ENCODE measurements at regions of chr10 and their contacts with region 1.

Region 1: DNA sequence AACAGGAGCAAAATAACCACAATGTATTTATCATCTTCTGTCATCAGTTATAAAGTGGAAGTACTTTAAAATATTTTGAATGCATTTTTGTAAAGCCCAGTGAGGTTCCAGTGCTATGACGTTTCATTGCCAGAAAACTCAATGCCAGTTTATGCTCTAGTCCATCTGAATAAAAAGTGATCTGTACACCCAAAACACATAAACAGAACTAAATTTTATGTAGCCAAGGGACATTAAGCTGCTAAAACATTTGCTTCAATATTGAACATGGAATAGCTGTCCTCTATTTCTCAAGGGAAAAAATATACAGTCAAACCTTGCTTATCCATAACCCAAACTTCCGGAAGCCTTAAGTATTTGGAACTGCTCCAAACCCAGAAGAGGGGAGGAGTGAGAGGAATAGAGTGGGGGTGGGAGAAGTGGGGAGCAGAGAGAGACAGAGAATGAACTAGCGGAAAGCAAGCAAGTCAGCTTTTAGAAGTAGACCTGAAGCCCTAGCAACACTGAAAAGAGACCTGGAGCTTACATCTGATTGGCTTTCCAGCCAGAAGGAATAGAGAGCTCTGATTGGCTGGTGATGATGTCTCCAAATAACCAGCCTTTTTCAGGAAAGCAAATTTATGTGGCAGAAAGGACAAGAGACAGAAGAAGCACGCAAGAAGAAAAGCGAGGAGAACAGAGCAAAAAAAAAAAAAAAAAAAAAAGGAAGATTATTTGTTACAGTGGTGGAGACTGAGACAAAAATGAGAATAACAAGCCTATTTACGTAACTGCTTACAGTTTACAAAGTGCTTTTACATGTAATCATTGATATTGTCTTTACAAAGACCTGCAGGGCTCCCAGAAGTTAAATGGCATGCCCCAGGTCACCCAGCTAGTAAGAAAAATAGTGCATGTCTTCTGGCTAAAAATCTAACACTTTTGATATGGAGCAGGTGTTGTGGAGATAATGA is 196.0 kb downstream of the RNLS start:
- DNase-seq: peak; percentile 48
- H3K4me3 ChIP-seq: peak overlapping the region in 1 of 2 experiments; percentile 17; a peak in 1 of 4 replicates
- H3K27ac ChIP-seq: peak overlapping the region; percentile 55 to 98
- H3K4me1 ChIP-seq: peaks cover 9 to 35% of the 10 kb centered on the region in 2 experiments; a peak in 3 of 4 replicates
- H3K27me3 ChIP-seq: no peaks in the 10 kb centered on the region
- CTCF ChIP-seq: no peak
- EP300 ChIP-seq: 0 out of 4 replicates have a peak, but pooled peaks of 1 of the 2 experiments have one; percentile 4
- RAD21 ChIP-seq: 0 out of 2 replicates have a peak, but pooled peaks have one; percentile 0

Region 2: GRCh38 chr10:87850742-87851205 is 536.3 kb before region 1 on chr10:
- CTCF ChIA-PET with region 1: interaction called, 12 read pairs
- POLR2A ChIA-PET with region 1: no interaction called
- DNase-seq: peak; percentile 57
- H3K4me3 ChIP-seq: no peak overlapping the region; a peak in 1 of 4 replicates
- H3K27ac ChIP-seq: no peak overlapping the region
- H3K4me1 ChIP-seq: peaks cover 2 to 4% of the 10 kb centered on the region in 2 experiments; a peak in 2 of 4 replicates
- H3K27me3 ChIP-seq: no peaks in the 10 kb centered on the region
- CTCF ChIP-seq: peak; percentile 65
- EP300 ChIP-seq: no peak
- RAD21 ChIP-seq: peak; percentile 90

Region 3: GRCh38 chr10:88114368-88114767 is 272.7 kb before region 1 on chr10:
- CTCF ChIA-PET with region 1: interaction called, 12 read pairs
- POLR2A ChIA-PET with region 1: no interaction called
- DNase-seq: peak; percentile 36
- H3K4me3 ChIP-seq: no peak overlapping the region
- H3K27ac ChIP-seq: no peak overlapping the region
- H3K4me1 ChIP-seq: peaks cover 7 to 14% of the 10 kb centered on the region in 2 experiments; a peak in 3 of 4 replicates
- H3K27me3 ChIP-seq: no peaks in the 10 kb centered on the region
- CTCF ChIP-seq: peak; percentile 50
- EP300 ChIP-seq: no peak
- RAD21 ChIP-seq: peak; percentile 74

Region 4: DNA sequence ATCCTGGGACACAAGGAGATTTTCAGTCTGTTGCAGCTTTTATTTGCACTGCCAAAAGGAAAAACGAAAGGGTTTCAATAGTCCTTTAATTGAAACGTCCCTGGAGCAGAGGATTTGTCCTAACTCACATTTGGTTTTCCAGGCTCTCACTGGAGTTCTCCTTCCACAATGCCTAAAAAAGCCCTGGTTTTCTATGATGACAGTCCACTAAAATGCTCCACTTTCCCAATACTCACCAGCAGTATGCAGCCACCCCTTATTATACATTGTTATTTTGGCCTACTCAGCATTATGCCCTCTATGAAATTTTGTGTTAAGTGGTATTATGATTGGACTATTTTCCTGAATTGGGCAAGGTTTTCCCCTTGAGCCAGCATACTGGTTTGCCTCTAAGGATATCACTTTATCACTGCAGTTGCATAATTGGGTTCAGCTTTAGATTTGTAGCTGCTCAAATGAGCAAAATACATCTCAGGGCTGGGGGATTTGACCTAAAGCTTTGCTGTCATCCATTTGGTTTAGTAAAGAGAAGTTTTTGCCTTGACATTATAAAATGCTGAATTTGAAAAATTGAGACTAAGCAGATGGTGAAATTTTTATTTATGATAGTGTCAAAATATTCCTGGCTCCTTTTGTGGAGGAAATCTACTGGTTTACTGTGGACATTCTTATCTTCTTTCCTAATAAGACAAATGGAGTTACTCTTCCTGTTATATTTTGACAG is 43.2 kb before region 1 on chr10:
- CTCF ChIA-PET with region 1: interaction called, 12 read pairs
- POLR2A ChIA-PET with region 1: interaction called, 10 read pairs
- DNase-seq: peak; percentile 43
- H3K4me3 ChIP-seq: no peak overlapping the region
- H3K27ac ChIP-seq: peak overlapping the region in 1 of 2 experiments; percentile 98; a peak in 2 of 4 replicates
- H3K4me1 ChIP-seq: peaks cover 0 to 52% of the 10 kb centered on the region in 2 experiments; a peak in 2 of 4 replicates
- H3K27me3 ChIP-seq: no peaks in the 10 kb centered on the region
- CTCF ChIP-seq: no peak
- EP300 ChIP-seq: peak; percentile 18 to 90; a peak in 2 of 4 replicates
- RAD21 ChIP-seq: no peak

Region 5: DNA sequence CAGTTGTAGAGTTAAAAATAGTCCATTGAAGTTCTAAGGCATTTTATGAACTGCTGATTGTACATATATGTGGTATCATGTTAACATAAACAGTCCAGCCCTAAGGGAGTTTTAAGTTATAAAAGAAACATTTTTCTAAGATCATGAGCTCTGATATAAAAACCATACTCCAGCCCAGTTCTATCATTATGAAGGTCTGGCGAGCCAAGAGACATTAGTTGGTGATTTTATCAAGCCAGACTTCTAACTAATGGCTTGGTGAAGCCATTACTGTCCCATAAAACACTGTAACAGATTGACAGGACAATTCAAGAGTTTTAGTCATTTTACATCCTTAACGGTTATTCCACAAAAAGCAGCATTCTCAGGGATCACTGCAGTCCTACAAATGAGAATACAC is 25.6 kb before region 1 on chr10:
- CTCF ChIA-PET with region 1: interaction called, 14 read pairs
- POLR2A ChIA-PET with region 1: interaction called, 3 read pairs
- DNase-seq: peak; percentile 51
- H3K4me3 ChIP-seq: no peak overlapping the region
- H3K27ac ChIP-seq: peak overlapping the region; percentile 61 to 97; a peak in 3 of 4 replicates
- H3K4me1 ChIP-seq: peaks cover 0 to 14% of the 10 kb centered on the region in 2 experiments; a peak in 2 of 4 replicates
- H3K27me3 ChIP-seq: no peaks in the 10 kb centered on the region
- CTCF ChIP-seq: no peak
- EP300 ChIP-seq: peak; percentile 69 to 98; a peak in 3 of 4 replicates
- RAD21 ChIP-seq: peak; percentile 45

Region 6: GRCh38 chr10:88450201-88450600 is 63.1 kb after region 1 on chr10:
- CTCF ChIA-PET with region 1: no interaction called
- POLR2A ChIA-PET with region 1: no interaction called
- DNase-seq: no peak
- H3K4me3 ChIP-seq: no peak overlapping the region
- H3K27ac ChIP-seq: no peak overlapping the region
- H3K4me1 ChIP-seq: no peaks in the 10 kb centered on the region
- H3K27me3 ChIP-seq: no peaks in the 10 kb centered on the region
- CTCF ChIP-seq: no peak
- EP300 ChIP-seq: no peak
- RAD21 ChIP-seq: no peak

Region 7: DNA sequence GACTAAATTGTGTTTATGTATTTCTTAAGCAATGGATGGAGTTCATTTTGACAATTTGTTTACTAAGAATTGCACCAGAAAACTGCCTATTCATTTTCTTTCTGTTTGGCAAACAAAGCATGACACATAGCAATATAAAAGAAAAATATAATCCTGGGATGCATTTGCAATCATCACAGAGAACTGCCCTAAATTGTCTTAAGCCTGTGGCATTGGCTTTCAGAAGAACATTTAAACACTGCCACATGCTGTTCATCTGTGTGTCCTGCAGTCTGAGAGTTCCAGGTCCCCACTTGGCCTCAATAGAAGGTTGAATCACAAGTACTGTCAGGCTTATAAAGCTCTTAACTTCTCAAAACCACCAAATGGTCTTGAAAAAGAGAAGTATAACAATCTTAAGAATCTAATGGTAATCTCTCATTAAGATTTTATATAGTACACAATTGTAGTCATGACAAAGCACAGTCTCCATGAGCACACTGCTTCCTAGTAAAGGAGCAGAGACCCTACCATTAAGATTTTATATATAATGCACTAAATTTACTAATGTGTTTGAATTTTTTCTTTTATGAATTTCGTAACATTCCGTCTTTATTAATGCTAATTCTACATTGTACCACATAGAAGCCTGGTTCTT is 166.1 kb after region 1 on chr10:
- CTCF ChIA-PET with region 1: interaction called, 21 read pairs
- POLR2A ChIA-PET with region 1: no interaction called
- DNase-seq: peak; percentile 48
- H3K4me3 ChIP-seq: no peak overlapping the region
- H3K27ac ChIP-seq: peak overlapping the region in 1 of 2 experiments; percentile 34; a peak in 1 of 4 replicates
- H3K4me1 ChIP-seq: peaks cover 8% of the 10 kb centered on the region in 2 experiments; a peak in 2 of 4 replicates
- H3K27me3 ChIP-seq: no peaks in the 10 kb centered on the region
- CTCF ChIP-seq: peak; percentile 85
- EP300 ChIP-seq: no peak
- RAD21 ChIP-seq: peak; percentile 98